Lower leg skin (tissue), 4 donors: ENCODE measurements at regions of chr1 and their contacts with region 1.

Region 1: GRCh38 chr1:77336729-77337128 is 54.9 kb downstream of the AK5 start:
- DNase-seq: no peak
- H3K4me3 ChIP-seq: no peak overlapping the region
- CTCF ChIP-seq: no peak
- POLR2A ChIP-seq: no peak

Region 2: DNA sequence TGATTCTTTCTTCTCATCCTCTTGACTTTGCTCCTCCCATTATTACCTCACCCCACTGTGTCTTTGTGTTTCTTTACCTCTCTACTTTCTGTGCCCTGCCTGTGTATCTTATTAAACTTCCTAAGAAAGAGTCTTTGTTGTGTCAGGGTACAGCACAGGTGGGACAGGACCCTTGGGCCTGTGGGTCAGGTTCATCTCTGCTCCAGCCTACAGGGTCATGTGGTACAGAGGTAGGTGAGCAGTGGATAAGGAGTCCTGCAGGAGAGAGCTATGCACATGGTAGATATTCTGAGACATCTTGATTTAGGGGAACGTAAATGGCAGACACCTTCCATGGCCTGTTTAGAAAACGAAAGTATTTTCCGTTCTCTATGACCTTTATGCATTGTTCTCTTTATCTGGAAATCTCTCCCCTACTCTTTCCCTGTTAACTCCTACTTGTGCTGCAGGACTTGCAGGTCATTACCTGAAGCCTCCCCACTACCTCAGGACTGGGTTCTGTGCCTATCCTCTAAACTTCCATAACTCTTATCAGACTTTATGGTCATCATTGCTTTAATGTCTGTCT is 718.9 kb after region 1 on chr1:
- intact Hi-C with region 1: loop called (anchors 5 kb)
- DNase-seq: no peak
- H3K4me3 ChIP-seq: no peak overlapping the region
- CTCF ChIP-seq: no peak
- POLR2A ChIP-seq: no peak